Heart left ventricle (tissue), 16 donors: ENCODE measurements at regions of chr10 and their contacts with region 1.

Region 1: DNA sequence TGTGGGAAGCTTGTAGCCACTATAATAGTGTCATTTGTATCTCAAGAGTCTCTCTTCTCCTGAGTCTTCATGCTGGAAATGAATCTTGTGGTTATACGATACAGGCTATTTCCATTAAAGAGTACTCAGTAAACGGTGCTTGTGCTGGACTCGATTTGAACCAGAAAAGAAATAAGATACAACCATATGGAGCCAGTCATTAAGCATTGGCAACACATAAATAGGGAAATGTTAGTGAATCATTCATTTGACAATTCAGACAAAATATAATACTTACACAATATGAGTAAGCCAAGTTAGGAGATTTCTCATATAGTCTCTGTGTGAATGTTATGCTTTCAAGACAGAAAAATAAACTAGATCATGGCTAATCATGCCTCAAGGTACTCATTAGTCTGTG is 356.8 kb downstream of the PLXDC2 start:
- DNase-seq: no peak
- ATAC-seq: no peak
- H3K4me3 ChIP-seq: no peak overlapping the region
- H3K27ac ChIP-seq: no peak overlapping the region
- H3K4me1 ChIP-seq: no peaks in the 10 kb centered on the region
- H3K27me3 ChIP-seq: no peaks in the 10 kb centered on the region
- CTCF ChIP-seq: no peak
- POLR2A ChIP-seq: no peak

Region 2: DNA sequence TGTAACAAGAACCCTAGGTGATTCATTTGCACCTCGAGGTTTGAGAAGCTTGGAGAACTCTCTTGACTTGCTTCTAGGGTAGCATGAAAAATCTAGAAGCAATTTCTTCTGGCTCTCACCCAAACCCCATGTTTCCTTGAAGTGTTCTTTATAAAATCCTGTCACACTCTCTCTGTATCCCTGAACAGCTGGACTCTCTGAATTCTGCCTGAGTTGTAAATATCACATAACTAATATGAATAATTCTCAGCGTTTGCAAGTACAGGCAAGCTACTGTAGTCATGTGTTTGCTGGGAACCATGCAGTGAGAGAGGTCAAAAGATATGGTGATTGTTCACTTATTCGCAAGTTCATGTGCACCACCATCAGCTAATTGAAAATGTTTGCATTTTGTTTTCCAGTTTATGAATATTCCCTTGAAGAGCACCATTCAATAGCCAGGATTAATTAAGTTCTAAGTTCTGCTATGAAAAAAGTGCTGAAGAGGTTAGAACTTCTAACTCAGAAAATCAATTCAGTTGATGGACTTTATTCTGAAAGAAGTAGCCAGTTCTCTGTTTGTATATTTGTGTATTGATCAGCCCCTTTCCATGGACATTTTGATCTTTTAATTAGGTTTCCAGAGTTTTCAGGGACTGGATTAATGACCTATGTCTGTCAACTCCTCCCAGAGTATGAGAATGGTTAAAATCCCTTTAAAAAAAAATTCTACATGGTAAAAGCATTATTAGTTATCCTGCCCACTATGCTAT is 113.8 kb before region 1 on chr10:
- intact Hi-C with region 1: loop called in 1 of 10 experiments (anchors 10 kb)
- DNase-seq: no peak
- ATAC-seq: peak in 3 of 4 donors; percentile 57 to 62 (median 58)
- H3K4me3 ChIP-seq: no peak overlapping the region
- H3K27ac ChIP-seq: no peak overlapping the region
- H3K4me1 ChIP-seq: peaks cover 0 to 12% (median 0%) of the 10 kb centered on the region in 12 donors
- H3K27me3 ChIP-seq: no peaks in the 10 kb centered on the region
- CTCF ChIP-seq: no peak
- POLR2A ChIP-seq: no peak

Region 3: DNA sequence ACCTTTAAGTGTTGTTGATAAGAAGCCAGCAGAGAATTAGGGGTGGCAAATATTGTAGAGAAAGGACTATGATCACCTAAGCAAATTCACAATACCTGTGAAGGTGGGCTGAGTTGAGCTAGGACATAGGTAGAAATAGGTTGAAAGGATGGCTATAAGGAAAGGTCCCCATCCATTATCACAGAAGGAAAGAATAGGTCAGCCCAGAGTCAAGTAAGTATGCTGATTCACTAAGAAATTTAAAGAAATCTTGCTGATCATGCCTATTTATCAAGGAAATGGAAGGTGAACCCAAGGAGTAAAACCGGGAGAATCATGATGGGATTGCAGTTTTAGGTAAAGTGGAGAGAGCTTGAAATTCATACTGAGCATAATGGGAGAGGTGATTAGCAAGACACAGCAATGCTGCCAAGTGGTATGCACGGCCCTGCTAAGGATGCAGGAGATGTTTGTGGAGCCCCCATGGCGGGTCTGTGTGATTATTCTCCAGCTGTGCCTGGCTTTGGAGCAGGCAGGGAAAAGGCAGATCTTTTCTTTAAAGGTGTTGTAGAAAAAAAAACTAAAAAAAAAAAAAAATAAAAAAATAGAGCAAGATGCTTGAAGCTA is 42.6 kb after region 1 on chr10:
- intact Hi-C with region 1: no loop called
- DNase-seq: no peak
- ATAC-seq: no peak
- H3K4me3 ChIP-seq: no peak overlapping the region
- H3K27ac ChIP-seq: no peak overlapping the region
- H3K4me1 ChIP-seq: peaks cover 0 to 8% (median 0%) of the 10 kb centered on the region in 12 donors
- H3K27me3 ChIP-seq: no peaks in the 10 kb centered on the region
- CTCF ChIP-seq: no peak
- POLR2A ChIP-seq: no peak